Activated CD4-positive, alpha-beta memory T cell treated with anti-CD3 and anti-CD28 coated beads for 36 hours (primary cell): ENCODE measurements at regions of chr10 and their contacts with region 1.

Region 1: GRCh38 chr10:3785257-3785850 is 345 bp upstream of the KLF6 start:
- DNase-seq: peak; percentile 100
- H3K4me3 Mint-ChIP-seq: peak overlapping the region; percentile 96
- H3K27ac Mint-ChIP-seq: peak overlapping the region; percentile 98
- H3K4me1 Mint-ChIP-seq: peaks cover 27% of the 10 kb centered on the region
- H3K27me3 Mint-ChIP-seq: peaks cover 2% of the 10 kb centered on the region

Region 2: GRCh38 chr10:3239066-3239919 is 546.1 kb before region 1 on chr10:
- CTCF ChIA-PET with region 1: interaction called, 4 read pairs
- POLR2A ChIA-PET with region 1: no interaction called
- intact Hi-C with region 1: loop called (anchors 1 kb)
- DNase-seq: peak; percentile 81
- H3K4me3 Mint-ChIP-seq: no peak overlapping the region
- H3K27ac Mint-ChIP-seq: no peak overlapping the region
- H3K4me1 Mint-ChIP-seq: peaks cover 3% of the 10 kb centered on the region
- H3K27me3 Mint-ChIP-seq: peaks cover 32% of the 10 kb centered on the region

Region 3: GRCh38 chr10:3729397-3729976 is 55.9 kb before region 1 on chr10:
- CTCF ChIA-PET with region 1: no interaction called
- POLR2A ChIA-PET with region 1: no interaction called
- intact Hi-C with region 1: no loop called
- DNase-seq: no peak
- H3K4me3 Mint-ChIP-seq: no peak overlapping the region
- H3K27ac Mint-ChIP-seq: no peak overlapping the region
- H3K4me1 Mint-ChIP-seq: peaks cover 2% of the 10 kb centered on the region
- H3K27me3 Mint-ChIP-seq: no peaks in the 10 kb centered on the region

Region 4: GRCh38 chr10:3757638-3758490 is 27.5 kb before region 1 on chr10:
- CTCF ChIA-PET with region 1: interaction called, 10 read pairs
- POLR2A ChIA-PET with region 1: interaction called, 112 read pairs
- intact Hi-C with region 1: no loop called
- DNase-seq: peak; percentile 84
- H3K4me3 Mint-ChIP-seq: peak overlapping the region; percentile 71
- H3K27ac Mint-ChIP-seq: peak overlapping the region; percentile 100
- H3K4me1 Mint-ChIP-seq: peaks cover 83% of the 10 kb centered on the region
- H3K27me3 Mint-ChIP-seq: no peaks in the 10 kb centered on the region

Region 5: GRCh38 chr10:3835770-3836169 is 50.4 kb after region 1 on chr10:
- CTCF ChIA-PET with region 1: no interaction called
- POLR2A ChIA-PET with region 1: interaction called, 27 read pairs
- intact Hi-C with region 1: loop called (anchors 2 kb)
- DNase-seq: no peak
- H3K4me3 Mint-ChIP-seq: peak overlapping the region; percentile 43
- H3K27ac Mint-ChIP-seq: peak overlapping the region; percentile 80
- H3K4me1 Mint-ChIP-seq: peaks cover 72% of the 10 kb centered on the region
- H3K27me3 Mint-ChIP-seq: no peaks in the 10 kb centered on the region

Region 6: DNA sequence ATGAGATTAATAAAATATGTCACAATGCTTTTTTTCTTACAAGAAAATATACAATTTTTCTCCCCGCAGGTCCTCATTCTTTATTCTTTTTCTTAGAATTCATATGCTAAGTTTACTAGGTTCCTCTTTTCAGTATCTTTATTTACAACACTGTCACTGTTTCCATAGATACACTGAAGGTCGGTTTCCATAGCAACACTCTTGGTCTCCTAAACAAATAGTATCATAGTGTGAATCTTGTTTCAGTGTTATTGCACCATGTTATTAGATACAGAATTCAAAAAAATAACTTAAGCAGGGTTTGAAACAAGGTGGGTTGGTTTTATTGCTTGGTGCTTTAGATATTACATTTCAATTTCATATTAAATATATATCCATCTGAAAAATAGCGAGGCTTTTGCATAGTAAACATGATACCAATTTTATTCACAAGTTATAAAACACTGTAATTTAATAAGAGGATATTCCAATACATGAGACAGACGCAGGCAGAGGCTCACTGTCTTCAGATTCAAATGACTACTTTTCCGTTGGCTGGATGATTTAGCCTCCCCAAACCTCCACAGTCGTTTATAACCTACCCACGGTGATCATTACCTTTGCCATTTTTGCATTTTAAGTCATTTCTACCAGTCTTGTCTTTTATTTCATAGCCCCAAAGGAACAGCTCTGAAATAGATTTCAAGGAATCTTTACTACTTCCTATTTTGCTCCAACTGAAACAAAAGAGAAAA is 88.5 kb after region 1 on chr10:
- CTCF ChIA-PET with region 1: no interaction called
- POLR2A ChIA-PET with region 1: interaction called, 115 read pairs
- intact Hi-C with region 1: loop called (anchors 1 kb)
- DNase-seq: no peak
- H3K4me3 Mint-ChIP-seq: no peak overlapping the region
- H3K27ac Mint-ChIP-seq: peak overlapping the region; percentile 87
- H3K4me1 Mint-ChIP-seq: peaks cover 72% of the 10 kb centered on the region
- H3K27me3 Mint-ChIP-seq: no peaks in the 10 kb centered on the region

Region 7: GRCh38 chr10:3948843-3949242 is 163.5 kb after region 1 on chr10:
- CTCF ChIA-PET with region 1: interaction called, 3 read pairs
- POLR2A ChIA-PET with region 1: interaction called, 4 read pairs
- intact Hi-C with region 1: loop called (anchors 5 kb)
- DNase-seq: peak; percentile 88
- H3K4me3 Mint-ChIP-seq: peak overlapping the region; percentile 66
- H3K27ac Mint-ChIP-seq: peak overlapping the region; percentile 83
- H3K4me1 Mint-ChIP-seq: peaks cover 58% of the 10 kb centered on the region
- H3K27me3 Mint-ChIP-seq: no peaks in the 10 kb centered on the region